Cardiac septum (tissue), 1 donor: ENCODE measurements at regions of chr4 and their contacts with region 1.

Region 1: DNA sequence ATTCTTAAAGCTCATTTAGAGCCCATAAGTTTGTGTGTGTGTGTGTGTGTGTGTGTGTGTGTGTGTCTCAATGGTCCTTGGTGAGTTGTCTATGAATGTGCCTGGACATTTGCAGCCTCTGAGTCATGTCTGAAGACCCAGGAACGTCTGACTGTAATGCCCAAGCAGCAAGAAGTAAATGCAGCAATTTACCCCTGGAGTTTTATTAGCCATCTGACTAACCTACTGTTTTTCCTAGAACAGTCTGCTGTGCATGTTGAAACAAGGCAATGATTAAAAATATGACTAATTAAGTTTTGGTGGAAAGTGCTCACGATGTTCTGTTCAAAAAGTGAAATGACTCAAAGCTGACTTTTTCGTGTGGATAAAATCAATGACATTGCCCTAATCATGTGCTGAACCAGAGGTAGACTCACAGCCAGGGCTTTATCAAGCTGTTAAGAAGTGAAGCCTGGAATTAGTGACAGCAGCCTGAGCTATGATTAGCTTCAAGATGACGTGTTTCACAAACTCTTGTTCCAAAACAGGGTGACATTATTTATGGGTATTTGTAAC is 201.6 kb downstream of the CPE start:
- DNase-seq: no peak

Region 2: GRCh38 chr4:165621983-165622382 is 41.6 kb after region 1 on chr4:
- intact Hi-C with region 1: no loop called
- DNase-seq: no peak

Region 3: DNA sequence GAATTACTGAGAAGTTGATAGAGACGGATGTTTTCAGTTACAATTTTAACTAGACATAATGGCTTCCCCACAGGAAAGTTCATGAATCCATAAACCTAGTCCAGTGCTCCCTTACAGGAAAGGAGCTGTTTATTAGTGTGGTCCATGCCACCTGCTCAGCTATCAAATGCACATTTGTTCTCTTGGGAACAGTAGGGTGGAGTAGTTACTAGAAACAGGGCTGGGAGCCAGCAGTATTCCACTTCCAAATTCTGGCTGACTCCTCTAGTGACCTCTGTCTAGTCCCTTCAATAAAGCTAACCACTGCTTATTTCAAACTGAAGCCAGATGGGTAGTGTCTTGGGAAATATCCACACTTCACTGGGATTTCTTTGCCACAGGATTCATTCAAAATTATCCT is 204.2 kb after region 1 on chr4:
- intact Hi-C with region 1: loop called (anchors 5 kb)
- DNase-seq: no peak